Transverse colon (tissue), 4 donors: ENCODE measurements at regions of chr16 and their contacts with region 1.

Region 1: GRCh38 chr16:7765079-7765550 is 432.5 kb downstream of the RBFOX1 start:
- DNase-seq: no peak
- H3K4me3 ChIP-seq: no peak overlapping the region
- H3K27ac ChIP-seq: no peak overlapping the region
- H3K4me1 ChIP-seq: no peaks in the 10 kb centered on the region
- H3K27me3 ChIP-seq: no peaks in the 10 kb centered on the region
- CTCF ChIP-seq: no peak
- EP300 ChIP-seq: no peak
- POLR2A ChIP-seq: no peak

Region 2: GRCh38 chr16:8323153-8323552 is 558.0 kb after region 1 on chr16:
- in situ Hi-C with region 1: no loop called
- intact Hi-C with region 1: loop called (anchors 5 kb)
- DNase-seq: no peak
- H3K4me3 ChIP-seq: no peak overlapping the region
- H3K27ac ChIP-seq: no peak overlapping the region
- H3K4me1 ChIP-seq: no peaks in the 10 kb centered on the region
- H3K27me3 ChIP-seq: no peaks in the 10 kb centered on the region
- CTCF ChIP-seq: no peak
- EP300 ChIP-seq: no peak
- POLR2A ChIP-seq: no peak